ENCODE measurements at regions of chr7 and their contacts with region 1.

Region 1: GRCh38 chr7:151110941-151111645 is 24.8 kb downstream of the AGAP3 start:
- DNase-seq: peak; percentile 69 to 87
- ATAC-seq: peak; percentile 74 to 91 (median 80)
- H3K4me3 ChIP-seq: no peak overlapping the region
- H3K4me3 Mint-ChIP-seq: no peak overlapping the region
- H3K27ac ChIP-seq: no peak overlapping the region
- H3K27ac Mint-ChIP-seq: no peak overlapping the region
- H3K4me1 ChIP-seq: peaks cover 11% of the 10 kb centered on the region
- H3K4me1 Mint-ChIP-seq: peaks cover 0 to 9% of the 10 kb centered on the region in 2 donors
- H3K27me3 ChIP-seq: peaks cover 2% of the 10 kb centered on the region
- H3K27me3 Mint-ChIP-seq: no peaks in the 10 kb centered on the region
- CTCF ChIP-seq: peak; percentile 85

Region 2: DNA sequence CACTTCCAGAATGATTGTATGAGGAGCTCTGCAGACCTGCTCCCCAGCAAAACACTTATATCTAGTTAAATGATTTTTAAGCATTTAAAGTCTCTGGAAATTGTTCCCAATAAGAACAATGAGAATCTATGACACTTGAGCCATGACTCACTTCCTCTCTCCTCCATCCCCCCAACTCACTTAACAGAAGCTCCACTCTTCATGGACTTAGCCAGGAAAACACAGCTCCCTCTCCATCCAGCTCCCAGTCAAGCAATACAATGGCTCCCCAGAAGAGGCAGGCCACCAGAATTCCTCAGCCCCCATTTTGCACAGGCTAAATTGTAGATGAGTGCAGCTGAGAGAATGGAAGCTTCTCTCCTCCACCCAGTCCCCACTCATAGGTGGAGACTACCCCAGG is 231.7 kb before region 1 on chr7:
- intact Hi-C with region 1: no loop called
- DNase-seq: no peak
- ATAC-seq: no peak
- H3K4me3 ChIP-seq: no peak overlapping the region
- H3K4me3 Mint-ChIP-seq: no peak overlapping the region
- H3K27ac ChIP-seq: no peak overlapping the region
- H3K27ac Mint-ChIP-seq: no peak overlapping the region
- H3K4me1 ChIP-seq: peaks cover 9% of the 10 kb centered on the region
- H3K4me1 Mint-ChIP-seq: peaks cover 0 to 11% of the 10 kb centered on the region in 2 donors
- H3K27me3 ChIP-seq: no peaks in the 10 kb centered on the region
- H3K27me3 Mint-ChIP-seq: peaks cover 28 to 53% of the 10 kb centered on the region in 2 donors
- CTCF ChIP-seq: no peak

Region 3: DNA sequence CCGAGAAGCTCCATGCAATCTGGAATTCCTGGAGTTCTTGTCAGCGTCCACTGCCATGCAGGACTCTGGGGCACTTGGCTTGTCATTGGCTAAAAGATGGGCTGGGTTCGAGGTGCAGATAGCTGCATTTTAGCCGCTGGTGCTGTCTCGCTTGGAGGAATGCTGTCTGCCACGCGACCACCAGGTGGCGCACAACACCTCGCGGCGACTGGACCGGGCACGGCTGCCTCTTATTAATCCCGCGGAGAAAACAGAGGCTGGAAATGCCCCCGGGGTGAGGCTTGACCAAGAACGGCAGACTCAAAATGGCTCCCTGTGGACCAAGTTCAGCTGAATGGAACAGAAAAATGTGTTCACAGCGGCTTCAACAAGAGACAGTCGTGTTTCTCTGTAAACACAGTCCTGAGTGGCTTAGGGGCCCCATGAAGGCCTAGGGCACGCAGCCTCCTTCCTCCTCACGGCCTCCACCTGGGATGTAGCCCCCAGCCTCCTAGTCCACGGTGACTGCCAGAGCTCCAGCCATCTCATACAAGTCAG is 212.6 kb before region 1 on chr7:
- intact Hi-C with region 1: loop called (anchors 1 kb)
- DNase-seq: peak; percentile 77 to 87
- ATAC-seq: peak; percentile 78 to 94 (median 84)
- H3K4me3 ChIP-seq: no peak overlapping the region
- H3K4me3 Mint-ChIP-seq: no peak overlapping the region
- H3K27ac ChIP-seq: no peak overlapping the region
- H3K27ac Mint-ChIP-seq: no peak overlapping the region
- H3K4me1 ChIP-seq: peaks cover 11% of the 10 kb centered on the region
- H3K4me1 Mint-ChIP-seq: peaks cover 0 to 8% of the 10 kb centered on the region in 2 donors
- H3K27me3 ChIP-seq: peaks cover 10% of the 10 kb centered on the region
- H3K27me3 Mint-ChIP-seq: peaks cover 63 to 84% of the 10 kb centered on the region in 2 donors
- CTCF ChIP-seq: peak; percentile 95

Region 4: GRCh38 chr7:150962553-150963399 is 148.3 kb before region 1 on chr7:
- intact Hi-C with region 1: loop called (anchors 1 kb)
- DNase-seq: peak; percentile 48 to 81
- ATAC-seq: peak; percentile 66 to 98 (median 94)
- H3K4me3 ChIP-seq: no peak overlapping the region
- H3K4me3 Mint-ChIP-seq: no peak overlapping the region
- H3K27ac ChIP-seq: no peak overlapping the region
- H3K27ac Mint-ChIP-seq: no peak overlapping the region
- H3K4me1 ChIP-seq: peaks cover 4% of the 10 kb centered on the region
- H3K4me1 Mint-ChIP-seq: peaks cover 0 to 9% of the 10 kb centered on the region in 2 donors
- H3K27me3 ChIP-seq: peaks cover 9% of the 10 kb centered on the region
- H3K27me3 Mint-ChIP-seq: peaks cover 39 to 42% of the 10 kb centered on the region in 2 donors
- CTCF ChIP-seq: peak; percentile 72

Region 5: DNA sequence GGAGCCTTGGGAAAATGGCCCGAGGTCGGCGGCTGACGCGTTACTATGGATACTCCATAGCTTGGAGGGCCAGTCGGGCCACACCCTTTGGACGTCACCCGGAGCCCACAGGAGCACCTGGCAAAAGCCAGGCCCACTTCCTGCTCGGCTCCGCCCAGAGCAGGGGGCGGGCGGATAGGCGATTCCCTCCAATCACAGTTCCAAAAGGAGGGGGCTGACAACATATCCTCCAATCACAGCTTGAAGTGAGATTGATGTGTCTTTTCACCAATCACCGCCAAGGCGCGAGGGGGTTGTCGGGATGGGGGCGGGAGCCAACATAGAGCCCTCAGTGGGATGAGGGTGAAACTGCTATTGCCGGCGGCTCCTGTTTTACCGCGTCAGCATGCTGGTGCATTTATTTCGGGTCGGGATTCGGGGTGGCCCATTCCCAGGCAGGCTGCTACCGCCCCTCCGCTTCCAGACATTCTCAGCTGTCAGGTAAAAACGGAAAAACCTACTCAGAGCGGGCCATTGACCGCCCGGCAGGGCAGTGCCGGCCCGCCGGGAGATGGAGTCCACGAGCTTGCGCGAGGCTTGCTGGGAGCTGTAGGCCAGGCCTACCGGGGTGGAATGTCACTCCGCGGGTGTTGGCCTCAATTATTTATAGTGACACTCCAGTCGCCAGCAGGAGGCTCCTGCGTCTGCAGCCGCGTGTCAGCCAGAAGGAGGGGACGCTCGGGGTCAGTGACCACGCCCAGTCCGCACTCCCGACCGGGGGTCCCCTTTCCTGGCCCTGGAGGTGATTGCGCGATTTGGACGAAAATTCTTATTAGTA is 82.8 kb before region 1 on chr7 and contains the start of gene ABCB8:
- intact Hi-C with region 1: loop called (anchors 2 kb)
- DNase-seq: peak; percentile 95 to 99
- ATAC-seq: peak; percentile 91 to 96 (median 92)
- H3K4me3 ChIP-seq: peak within 1 kb of the TSS; percentile 84
- H3K4me3 Mint-ChIP-seq: peak within 1 kb of the TSS; percentile 95
- H3K27ac ChIP-seq: peak within 1 kb of the TSS; percentile 96
- H3K27ac Mint-ChIP-seq: peak within 1 kb of the TSS; percentile 96 to 97
- H3K4me1 ChIP-seq: peaks cover 17% of the 10 kb centered on the region
- H3K4me1 Mint-ChIP-seq: peaks cover 15 to 16% of the 10 kb centered on the region in 2 donors
- H3K27me3 ChIP-seq: no peaks in the 10 kb centered on the region
- H3K27me3 Mint-ChIP-seq: no peaks in the 10 kb centered on the region
- CTCF ChIP-seq: peak; percentile 56
- total RNA-seq, gene ABCB8: 50.6 to 60.5 (median 53.7) TPM

Measured in natural killer cell (primary cell).